Head of caudate nucleus (tissue), 42 donors: ENCODE measurements at regions of chr3 and their contacts with region 1.

Region 1: DNA sequence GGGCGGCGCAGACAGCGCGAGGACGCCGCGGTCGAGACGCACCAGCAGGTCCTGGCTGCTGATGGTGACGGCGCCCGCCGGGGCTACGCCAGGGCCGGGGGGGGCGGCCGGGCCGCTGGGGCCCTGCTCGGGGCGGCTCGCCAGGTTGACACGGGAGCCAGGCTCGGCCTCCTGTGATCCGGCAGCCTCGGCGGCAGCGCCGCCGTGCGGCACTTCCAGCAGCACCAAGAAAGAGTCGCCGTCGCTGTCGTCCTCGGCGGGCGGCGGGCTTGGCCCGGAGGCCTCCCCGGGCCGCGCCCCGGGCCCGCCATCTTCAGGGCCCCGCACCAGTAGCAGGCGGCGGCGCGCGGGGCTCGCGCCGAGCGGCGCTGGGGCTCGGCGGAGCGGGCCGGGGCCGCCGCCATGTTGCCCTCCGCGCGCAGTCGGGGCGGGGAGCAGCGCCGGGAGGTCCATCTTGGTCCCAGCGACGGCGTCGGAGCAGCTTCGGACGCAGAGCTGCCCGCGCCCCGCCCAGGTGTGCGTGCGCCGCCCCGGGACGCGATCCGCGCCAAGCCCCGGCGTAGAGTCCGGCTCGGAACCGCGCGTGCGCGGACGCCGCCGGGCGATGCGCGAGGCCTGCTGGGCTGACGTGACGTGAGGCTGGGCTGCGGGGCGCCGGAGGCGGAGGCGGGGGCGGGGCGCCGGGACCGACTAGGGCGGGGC is at the start of gene ZXDC:
- DNase-seq: peak; percentile 75 to 98 (median 94)

Region 2: GRCh38 chr3:126259411-126260391 is 215.9 kb before region 1 on chr3:
- intact Hi-C with region 1: loop called (anchors 10 kb)
- DNase-seq: peak in 41 of 42 donors; percentile 55 to 90 (median 78)

Region 3: GRCh38 chr3:126357295-126358037 is 118.1 kb before region 1 on chr3 and contains the start of gene KLF15:
- intact Hi-C with region 1: loop called (anchors 10 kb)
- DNase-seq: peak; percentile 72 to 97 (median 93)

Region 4: DNA sequence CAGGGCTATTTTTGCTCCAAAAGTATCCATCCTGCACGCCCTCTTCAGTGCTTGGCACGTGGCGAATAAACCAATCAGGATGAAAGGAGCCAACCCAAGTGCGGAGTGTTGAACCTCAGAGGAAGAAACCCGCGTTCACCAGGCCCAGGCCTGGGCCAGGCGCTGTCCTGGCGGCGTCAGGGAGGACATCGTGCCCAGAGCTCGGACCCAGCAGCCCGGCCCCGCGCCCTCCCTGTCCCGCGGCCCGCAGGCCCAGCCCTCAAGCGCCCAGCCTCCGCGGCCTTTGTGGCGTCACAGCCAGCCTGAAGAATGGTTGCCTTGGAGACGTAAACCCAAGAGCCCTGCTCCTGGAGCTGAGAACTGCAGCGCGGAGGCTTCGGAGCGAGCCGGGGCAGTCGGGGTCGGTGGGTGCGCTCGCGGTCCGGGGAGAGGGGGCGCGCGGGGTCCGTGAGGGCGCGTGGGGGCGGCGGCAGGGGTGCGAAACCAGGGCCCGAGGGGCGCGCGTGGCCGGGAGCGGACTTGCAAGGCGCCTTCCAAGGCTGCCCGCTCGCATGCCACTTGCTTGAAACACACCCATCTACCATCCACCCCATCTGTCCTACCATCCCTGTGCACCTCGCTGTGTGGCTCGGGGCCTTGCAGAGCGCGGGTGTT is 80.9 kb before region 1 on chr3 and contains the start of gene CFAP100:
- intact Hi-C with region 1: loop called (anchors 10 kb)
- DNase-seq: peak in 41 of 42 donors; percentile 31 to 82 (median 65)

Region 5: GRCh38 chr3:126540342-126540849 is 64.8 kb after region 1 on chr3:
- intact Hi-C with region 1: no loop called
- DNase-seq: peak in 14 of 42 donors; percentile 1 to 27 (median 14)